Heart left ventricle (tissue), 16 donors: ENCODE measurements at regions of chr10 and their contacts with region 1.

Region 1: GRCh38 chr10:72331601-72332422 is 22.9 kb downstream of the DNAJB12 start:
- DNase-seq: peak; percentile 87 to 94 (median 90)
- ATAC-seq: peak; percentile 30 to 72 (median 64)
- H3K4me3 ChIP-seq: peak overlapping the region in 6 of 12 donors; percentile 8 to 26 (median 12)
- H3K27ac ChIP-seq: peak overlapping the region in 11 of 12 donors; percentile 50 to 98 (median 88)
- H3K4me1 ChIP-seq: peaks cover 15 to 98% (median 77%) of the 10 kb centered on the region in 12 donors
- H3K27me3 ChIP-seq: no peaks in the 10 kb centered on the region
- CTCF ChIP-seq: peak in 10 of 12 donors; percentile 11 to 41 (median 24)
- POLR2A ChIP-seq: peak in 1 of 2 donors; percentile 43

Region 2: GRCh38 chr10:71893920-71894319 is 437.9 kb before region 1 on chr10:
- intact Hi-C with region 1: loop called in 2 of 10 experiments (anchors 10 kb)
- DNase-seq: no peak
- ATAC-seq: no peak
- H3K4me3 ChIP-seq: no peak overlapping the region
- H3K27ac ChIP-seq: no peak overlapping the region
- H3K4me1 ChIP-seq: peaks cover 0 to 54% (median 7%) of the 10 kb centered on the region in 12 donors
- H3K27me3 ChIP-seq: no peaks in the 10 kb centered on the region
- CTCF ChIP-seq: no peak
- POLR2A ChIP-seq: no peak

Region 3: DNA sequence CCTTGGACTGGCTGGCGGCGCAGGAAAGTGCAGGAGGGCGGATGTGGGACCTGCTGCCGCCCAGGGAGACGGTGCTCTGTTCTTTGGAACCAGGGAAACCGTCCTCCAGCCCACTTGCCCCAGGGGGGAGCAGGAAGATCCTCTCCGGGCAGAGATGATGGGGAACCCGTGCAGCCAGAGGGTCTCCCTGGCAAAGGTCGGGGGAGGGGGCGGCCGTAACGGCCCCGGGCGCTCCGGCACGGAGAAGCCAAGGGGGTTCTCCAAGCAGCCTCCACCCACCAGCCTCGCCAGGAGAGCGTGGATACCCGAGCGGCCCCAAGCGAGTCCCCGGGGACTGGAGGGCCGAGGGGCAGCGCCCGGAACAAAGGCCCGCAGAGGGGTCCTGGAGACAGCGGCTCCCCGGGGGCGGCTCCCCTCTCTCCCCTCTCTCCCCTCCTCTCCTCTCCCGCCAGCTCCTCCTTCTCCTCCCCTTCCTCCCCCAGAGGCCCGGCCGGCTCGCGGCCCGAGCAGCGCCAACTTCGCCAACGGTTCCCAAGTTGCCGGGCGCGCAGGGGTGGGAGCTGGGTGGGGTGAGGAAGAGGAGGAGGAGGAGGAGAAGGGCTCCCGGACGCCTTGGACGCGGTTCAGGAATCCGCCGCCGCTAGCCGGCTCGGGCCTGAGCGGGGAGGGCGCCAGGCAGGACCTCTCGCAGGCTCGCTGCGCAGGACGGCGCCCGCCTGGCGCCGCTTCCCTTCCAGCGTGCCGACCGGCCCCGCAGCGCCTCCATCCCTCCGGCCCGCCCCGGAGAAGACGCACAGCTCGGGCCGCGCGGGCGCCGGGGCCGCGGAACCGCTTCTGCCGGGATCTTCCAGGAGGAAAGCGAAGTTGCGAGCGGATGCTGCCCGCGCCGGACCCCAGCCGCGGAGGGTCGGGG is 367.8 kb before region 1 on chr10 and contains the start of gene CHST3:
- intact Hi-C with region 1: loop called in 6 of 10 experiments (anchors 2 to 5 kb)
- DNase-seq: peak; percentile 88 to 91 (median 89)
- ATAC-seq: peak; percentile 68 to 87 (median 82)
- H3K4me3 ChIP-seq: peak within 1 kb of the TSS; percentile 62 to 97 (median 78)
- H3K27ac ChIP-seq: peak within 1 kb of the TSS; percentile 91 to 99 (median 98)
- H3K4me1 ChIP-seq: peaks cover 8 to 50% (median 36%) of the 10 kb centered on the region in 12 donors
- H3K27me3 ChIP-seq: peaks cover 0 to 23% (median 0%) of the 10 kb centered on the region in 9 donors
- CTCF ChIP-seq: peak in 2 of 12 donors; percentile 6 to 13
- POLR2A ChIP-seq: peak in 1 of 2 donors; percentile 59
- total RNA-seq, gene CHST3: 12.0 to 51.3 (median 25.0) TPM

Region 4: DNA sequence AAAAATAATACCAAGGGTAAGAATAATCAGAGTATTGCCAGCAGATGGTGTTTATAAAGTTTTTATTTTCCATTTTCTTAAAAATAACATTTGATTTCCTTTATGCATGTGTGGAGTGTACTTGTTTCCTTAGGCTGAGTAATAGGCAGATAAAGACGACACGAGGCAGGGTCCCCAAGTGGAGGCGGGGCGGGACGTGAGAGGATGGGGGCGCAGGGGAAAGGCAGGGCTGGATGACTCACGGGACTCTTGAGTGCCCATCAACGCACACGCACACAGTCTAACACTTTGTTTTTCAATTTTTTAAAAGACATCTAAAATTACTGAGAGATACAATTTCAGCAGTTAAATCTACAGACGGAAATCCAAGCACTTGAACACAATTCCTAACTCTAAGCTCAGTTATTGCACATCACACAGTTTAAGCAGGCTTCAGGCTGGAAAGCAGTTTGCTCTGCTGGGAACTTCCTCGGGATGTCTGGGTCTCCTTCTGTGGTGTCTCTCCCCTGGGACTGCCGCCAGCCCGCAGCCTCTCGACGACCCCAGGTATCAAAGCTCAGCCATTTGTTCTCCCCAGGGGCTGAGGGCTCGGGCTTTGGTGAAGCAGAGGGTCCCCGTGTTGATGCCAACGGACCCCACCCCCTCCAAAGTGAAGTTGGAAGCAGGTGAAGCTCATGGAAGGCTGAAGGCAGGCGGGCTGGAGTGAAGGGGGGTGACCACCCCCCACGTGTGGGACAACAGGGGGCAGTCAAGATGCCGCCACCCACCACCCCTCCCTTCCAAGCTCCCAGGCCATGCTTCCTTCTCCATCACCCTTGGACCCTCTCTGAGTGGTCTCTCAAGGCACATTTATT is 272.6 kb before region 1 on chr10:
- intact Hi-C with region 1: loop called in 4 of 10 experiments (anchors 5 kb)
- DNase-seq: no peak
- ATAC-seq: no peak
- H3K4me3 ChIP-seq: no peak overlapping the region
- H3K27ac ChIP-seq: peak overlapping the region in 2 of 12 donors; percentile 20 to 57
- H3K4me1 ChIP-seq: peaks cover 0 to 19% (median 7%) of the 10 kb centered on the region in 12 donors
- H3K27me3 ChIP-seq: no peaks in the 10 kb centered on the region
- CTCF ChIP-seq: no peak
- POLR2A ChIP-seq: no peak

Region 5: GRCh38 chr10:72133517-72133916 is 198.3 kb before region 1 on chr10:
- intact Hi-C with region 1: loop called (anchors 2 to 10 kb)
- DNase-seq: no peak
- ATAC-seq: peak in 3 of 4 donors; percentile 40 to 66 (median 43)
- H3K4me3 ChIP-seq: no peak overlapping the region
- H3K27ac ChIP-seq: no peak overlapping the region
- H3K4me1 ChIP-seq: peaks cover 0 to 16% (median 1%) of the 10 kb centered on the region in 12 donors
- H3K27me3 ChIP-seq: no peaks in the 10 kb centered on the region
- CTCF ChIP-seq: no peak
- POLR2A ChIP-seq: no peak

Region 6: DNA sequence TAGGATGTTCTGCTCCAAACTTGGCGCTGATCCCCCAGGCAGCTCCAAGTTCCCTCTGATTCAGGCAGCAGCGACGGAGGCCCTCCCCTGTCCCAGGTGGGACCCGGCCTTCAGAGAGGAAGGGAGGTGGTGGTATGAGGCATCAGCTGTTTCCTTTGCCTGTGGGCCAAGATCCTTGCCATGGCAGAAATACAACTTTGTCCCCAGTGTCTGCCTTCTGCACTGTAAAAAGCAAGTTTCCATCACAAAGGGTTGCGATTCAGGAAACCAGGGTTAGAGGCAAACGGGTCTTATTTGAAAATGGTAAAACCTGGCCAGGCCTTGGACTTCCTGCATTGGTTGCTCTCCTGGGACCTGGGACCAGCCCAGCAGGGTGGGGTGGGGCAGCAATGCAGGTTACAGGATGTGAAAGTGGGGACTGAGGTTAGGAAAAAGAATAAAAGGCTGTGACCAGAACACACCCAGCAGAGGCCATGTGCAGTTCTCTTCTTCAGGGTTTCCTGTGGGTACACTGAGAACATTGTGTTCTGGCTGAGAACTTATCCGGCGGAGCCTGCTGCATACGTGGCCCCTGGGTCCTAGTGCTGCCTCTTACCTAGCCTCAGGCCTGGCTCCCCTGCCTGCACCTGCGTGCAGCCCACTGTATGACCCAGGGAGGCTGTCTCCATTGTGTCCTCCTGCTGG is 83.2 kb before region 1 on chr10:
- intact Hi-C with region 1: loop called in 3 of 10 experiments (anchors 5 to 10 kb)
- DNase-seq: peak; percentile 88 to 91 (median 88)
- ATAC-seq: peak; percentile 87 to 93 (median 90)
- H3K4me3 ChIP-seq: peak overlapping the region in 9 of 12 donors; percentile 6 to 39 (median 16)
- H3K27ac ChIP-seq: peak overlapping the region; percentile 81 to 96 (median 92)
- H3K4me1 ChIP-seq: peaks cover 28 to 100% (median 87%) of the 10 kb centered on the region in 12 donors
- H3K27me3 ChIP-seq: no peaks in the 10 kb centered on the region
- CTCF ChIP-seq: no peak
- POLR2A ChIP-seq: peak in 1 of 2 donors; percentile 23

Region 7: GRCh38 chr10:72260588-72261322 is 71.1 kb before region 1 on chr10:
- intact Hi-C with region 1: loop called in 2 of 10 experiments (anchors 5 kb)
- DNase-seq: peak; percentile 85 to 94 (median 88)
- ATAC-seq: peak; percentile 81 to 93 (median 90)
- H3K4me3 ChIP-seq: peak overlapping the region; percentile 16 to 70 (median 52)
- H3K27ac ChIP-seq: peak overlapping the region; percentile 75 to 98 (median 92)
- H3K4me1 ChIP-seq: peaks cover 20 to 79% (median 50%) of the 10 kb centered on the region in 12 donors
- H3K27me3 ChIP-seq: no peaks in the 10 kb centered on the region
- CTCF ChIP-seq: peak in 2 of 12 donors; percentile 11 to 22
- POLR2A ChIP-seq: peak in 1 of 2 donors; percentile 35

Region 8: GRCh38 chr10:72379776-72380175 is 48.0 kb after region 1 on chr10:
- intact Hi-C with region 1: no loop called
- DNase-seq: no peak
- ATAC-seq: peak in 2 of 4 donors; percentile 22 to 47
- H3K4me3 ChIP-seq: no peak overlapping the region
- H3K27ac ChIP-seq: no peak overlapping the region
- H3K4me1 ChIP-seq: no peaks in the 10 kb centered on the region
- H3K27me3 ChIP-seq: no peaks in the 10 kb centered on the region
- CTCF ChIP-seq: no peak
- POLR2A ChIP-seq: no peak

Region 9: DNA sequence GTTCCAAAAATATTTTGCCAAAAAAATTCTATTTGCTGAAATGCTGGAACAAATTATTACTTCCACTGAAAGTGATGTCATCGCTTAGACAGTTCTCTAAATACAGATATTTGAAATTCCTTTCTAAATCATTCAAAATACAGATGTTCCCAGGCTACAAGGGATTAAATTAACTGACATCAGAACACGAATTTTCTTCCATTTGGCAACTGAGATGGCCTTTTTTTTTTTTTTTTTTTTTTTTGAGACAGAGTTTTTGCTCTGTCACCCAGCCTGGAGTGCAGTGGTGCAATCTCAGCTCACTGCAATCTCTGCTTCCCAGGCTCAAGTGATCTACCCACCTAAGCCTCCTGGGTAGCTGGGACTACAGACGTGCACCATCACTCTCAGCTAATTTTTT is 707.8 kb after region 1 on chr10:
- intact Hi-C with region 1: no loop called
- DNase-seq: no peak
- ATAC-seq: peak; percentile 42 to 78 (median 66)
- H3K4me3 ChIP-seq: no peak overlapping the region
- H3K27ac ChIP-seq: peak overlapping the region in 5 of 12 donors; percentile 18 to 56 (median 39)
- H3K4me1 ChIP-seq: peaks cover 0 to 17% (median 1%) of the 10 kb centered on the region in 12 donors
- H3K27me3 ChIP-seq: no peaks in the 10 kb centered on the region
- CTCF ChIP-seq: no peak
- POLR2A ChIP-seq: no peak